Upper lobe of right lung (tissue), 1 donor: ENCODE measurements at regions of chr13 and their contacts with region 1.

Region 1: GRCh38 chr13:75704579-75705320 is 68.6 kb downstream of the LMO7 start:
- DNase-seq: peak; percentile 84
- ATAC-seq: peak; percentile 96
- H3K4me3 ChIP-seq: peak overlapping the region; percentile 2
- H3K27ac ChIP-seq: peak overlapping the region; percentile 80
- H3K4me1 ChIP-seq: no peaks in the 10 kb centered on the region
- H3K27me3 ChIP-seq: no peaks in the 10 kb centered on the region
- CTCF ChIP-seq: peak; percentile 14

Region 2: DNA sequence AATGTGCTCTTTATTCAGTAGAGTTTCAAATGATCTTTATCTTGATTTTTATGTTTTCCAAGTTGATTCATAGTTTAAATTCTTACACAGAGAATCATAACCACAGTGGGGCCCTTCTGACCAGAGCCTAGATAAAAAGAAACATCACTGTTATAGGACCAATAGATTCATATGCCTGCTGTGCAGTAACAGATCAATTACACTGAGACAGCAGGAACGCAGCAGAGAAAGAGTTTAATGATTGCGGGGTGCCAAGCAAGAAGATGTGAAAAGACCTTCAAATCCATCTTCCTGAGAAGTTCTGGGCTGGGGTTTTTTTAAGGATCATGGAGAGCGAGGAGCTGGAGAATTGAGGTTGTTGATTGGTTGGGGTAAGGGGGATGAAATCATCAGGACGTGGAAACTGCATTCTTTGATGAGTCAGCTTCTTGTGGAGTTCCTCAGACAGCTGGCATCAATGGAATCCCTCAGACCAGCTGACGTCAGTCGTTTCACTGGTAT is 569.4 kb before region 1 on chr13:
- intact Hi-C with region 1: no loop called
- DNase-seq: no peak
- ATAC-seq: no peak
- H3K4me3 ChIP-seq: no peak overlapping the region
- H3K27ac ChIP-seq: no peak overlapping the region
- H3K4me1 ChIP-seq: no peaks in the 10 kb centered on the region
- H3K27me3 ChIP-seq: no peaks in the 10 kb centered on the region
- CTCF ChIP-seq: no peak

Region 3: GRCh38 chr13:75847588-75847987 is 142.8 kb after region 1 on chr13:
- intact Hi-C with region 1: loop called (anchors 10 kb)
- DNase-seq: no peak
- ATAC-seq: no peak
- H3K4me3 ChIP-seq: no peak overlapping the region
- H3K27ac ChIP-seq: no peak overlapping the region
- H3K4me1 ChIP-seq: no peaks in the 10 kb centered on the region
- H3K27me3 ChIP-seq: no peaks in the 10 kb centered on the region
- CTCF ChIP-seq: no peak

Region 4: DNA sequence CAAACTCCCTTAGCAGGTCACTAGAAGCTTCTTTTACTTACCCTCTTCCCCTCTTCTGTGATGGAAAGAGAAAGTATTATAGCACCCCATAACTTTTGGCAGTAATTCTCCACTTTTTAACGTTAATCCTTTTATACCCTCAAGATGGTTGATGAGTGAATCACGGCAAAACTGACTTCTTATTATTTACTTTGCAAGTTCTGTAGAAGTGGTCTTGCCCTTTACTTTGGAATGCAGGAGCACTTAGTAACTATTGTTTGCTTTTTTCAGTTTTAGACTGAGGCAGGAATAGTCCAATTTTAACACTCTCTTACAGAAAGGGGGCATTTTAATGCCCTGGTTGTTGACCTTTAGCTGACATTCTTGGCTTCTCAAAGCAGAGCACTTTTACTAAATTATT is 191.5 kb after region 1 on chr13:
- intact Hi-C with region 1: no loop called
- DNase-seq: no peak
- ATAC-seq: no peak
- H3K4me3 ChIP-seq: no peak overlapping the region
- H3K27ac ChIP-seq: no peak overlapping the region
- H3K4me1 ChIP-seq: no peaks in the 10 kb centered on the region
- H3K27me3 ChIP-seq: no peaks in the 10 kb centered on the region
- CTCF ChIP-seq: no peak

Region 5: GRCh38 chr13:76160961-76161925 is 456.5 kb after region 1 on chr13:
- intact Hi-C with region 1: no loop called
- DNase-seq: no peak
- ATAC-seq: no peak
- H3K4me3 ChIP-seq: no peak overlapping the region
- H3K27ac ChIP-seq: no peak overlapping the region
- H3K4me1 ChIP-seq: no peaks in the 10 kb centered on the region
- H3K27me3 ChIP-seq: no peaks in the 10 kb centered on the region
- CTCF ChIP-seq: no peak